ENCODE measurements at regions of chr16 and their contacts with region 1.

Region 1: DNA sequence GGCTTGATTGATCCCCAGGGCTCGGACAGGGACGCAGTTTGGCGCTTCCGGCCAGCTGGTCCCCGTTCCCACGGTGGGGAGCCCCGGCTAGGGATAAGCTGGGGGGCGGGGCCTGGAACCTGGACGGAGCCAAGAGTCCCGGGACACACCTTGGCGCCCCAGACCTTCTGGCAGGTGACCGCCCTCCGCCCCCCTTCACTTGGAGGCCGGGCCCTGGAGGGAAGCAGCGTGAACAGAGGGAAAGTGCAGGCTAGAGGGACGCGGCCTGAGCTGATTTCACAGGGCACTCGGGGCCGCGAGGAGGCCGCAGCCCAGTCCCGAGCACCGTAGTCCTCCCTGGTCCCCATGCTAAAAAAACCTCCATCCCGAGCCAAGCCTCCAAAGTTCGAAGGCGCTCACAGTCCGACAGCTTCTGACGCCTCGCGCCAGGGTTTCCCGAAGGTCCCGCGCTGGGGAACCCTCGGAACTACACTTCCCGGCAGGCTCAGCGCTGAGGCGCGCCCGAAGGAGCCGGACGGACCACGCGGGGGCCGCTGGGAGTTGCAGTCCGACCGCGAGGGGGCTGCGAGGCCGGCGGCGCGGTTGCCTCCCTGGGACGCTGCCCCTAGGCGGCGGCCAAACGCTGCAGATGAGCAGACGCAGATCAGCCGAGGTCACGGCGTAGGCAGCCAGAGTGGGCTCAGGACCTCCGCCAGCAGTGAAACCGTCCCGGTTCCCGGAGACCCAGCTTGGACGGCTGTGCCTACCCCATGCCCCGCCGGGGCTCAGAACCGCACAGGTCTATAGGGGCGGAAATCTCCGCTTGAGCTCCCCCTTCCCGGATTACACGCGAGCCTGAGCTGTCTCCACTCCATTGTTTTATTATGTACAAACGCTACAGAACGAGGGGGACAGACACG is at the start of gene TBX6:
- DNase-seq: peak; percentile 90 to 91
- ATAC-seq: peak; percentile 80 to 93
- H3K4me3 ChIP-seq: peak within 1 kb of the TSS; percentile 59
- H3K27ac ChIP-seq: peak within 1 kb of the TSS; percentile 79 to 94
- H3K4me1 ChIP-seq: peaks cover 29% of the 10 kb centered on the region
- CTCF ChIP-seq: peak; percentile 49; the same call in 2 of the 3 replicates
- EP300 ChIP-seq: no peak
- POLR2A ChIP-seq: peak; percentile 53
- RAD21 ChIP-seq: peak; percentile 76 to 82
- polyA plus RNA-seq, gene TBX6: 0.11 and 0.14 TPM in 2 replicates

Region 2: GRCh38 chr16:29678691-29679267 is 412.9 kb before region 1 on chr16 and contains the start of gene QPRT:
- CTCF ChIA-PET with region 1: no interaction called
- POLR2A ChIA-PET with region 1: no interaction called
- DNase-seq: peak in 1 of 2 experiments; percentile 21
- ATAC-seq: peak; percentile 60 to 76; a peak in 5 of 6 replicates
- H3K4me3 ChIP-seq: no peak within 1 kb of the TSS
- H3K27ac ChIP-seq: peak within 1 kb of the TSS in 1 of 2 experiments; percentile 73; a peak in 3 of 6 replicates
- H3K4me1 ChIP-seq: peaks cover 4% of the 10 kb centered on the region; the same call in 1 of the 3 replicates
- CTCF ChIP-seq: no peak
- EP300 ChIP-seq: no peak
- POLR2A ChIP-seq: no peak
- RAD21 ChIP-seq: no peak
- polyA plus RNA-seq, gene QPRT: 1.9 and 2.1 TPM in 2 replicates

Region 3: DNA sequence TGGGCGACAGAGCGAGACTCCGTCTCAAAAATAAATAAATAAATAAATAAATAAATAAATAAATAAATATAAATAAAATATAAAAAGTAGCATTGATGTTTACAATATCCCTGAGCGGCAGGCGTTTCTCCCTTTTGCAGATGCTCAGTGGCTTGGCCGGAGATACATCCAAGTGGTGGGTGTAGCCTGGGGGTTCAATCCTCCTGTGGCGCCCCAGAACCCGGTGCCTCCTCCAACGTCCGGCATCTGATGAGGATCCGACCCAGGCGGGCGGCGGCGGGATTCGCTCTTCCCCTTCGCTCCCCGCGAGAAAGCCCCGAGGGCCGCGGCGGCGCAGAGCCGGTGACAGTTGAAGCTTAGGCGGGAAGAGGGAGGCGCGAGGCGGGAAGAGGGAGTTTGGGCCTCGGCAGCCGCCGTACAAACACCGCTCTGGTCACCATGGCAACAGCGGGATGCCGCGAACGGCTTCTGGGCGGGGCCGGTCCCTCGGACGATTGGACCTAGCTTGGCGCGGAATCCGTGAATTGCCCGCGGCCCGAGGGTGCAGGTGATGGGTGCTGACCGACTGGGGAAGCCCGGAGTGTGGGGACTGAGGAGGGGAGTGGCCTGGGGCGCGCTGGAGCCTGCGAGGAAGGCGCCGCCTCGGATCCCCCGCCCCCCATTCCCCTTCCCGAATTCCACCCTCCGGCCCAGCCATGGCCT is 38.9 kb before region 1 on chr16:
- CTCF ChIA-PET with region 1: interaction called, 10 read pairs
- POLR2A ChIA-PET with region 1: interaction called, 3 read pairs
- DNase-seq: peak; percentile 94
- ATAC-seq: peak; percentile 74 to 81
- H3K4me3 ChIP-seq: peak overlapping the region; percentile 81
- H3K27ac ChIP-seq: peak overlapping the region; percentile 69 to 88
- H3K4me1 ChIP-seq: peaks cover 22% of the 10 kb centered on the region
- CTCF ChIP-seq: no peak
- EP300 ChIP-seq: no peak
- POLR2A ChIP-seq: no peak
- RAD21 ChIP-seq: no peak

Region 4: DNA sequence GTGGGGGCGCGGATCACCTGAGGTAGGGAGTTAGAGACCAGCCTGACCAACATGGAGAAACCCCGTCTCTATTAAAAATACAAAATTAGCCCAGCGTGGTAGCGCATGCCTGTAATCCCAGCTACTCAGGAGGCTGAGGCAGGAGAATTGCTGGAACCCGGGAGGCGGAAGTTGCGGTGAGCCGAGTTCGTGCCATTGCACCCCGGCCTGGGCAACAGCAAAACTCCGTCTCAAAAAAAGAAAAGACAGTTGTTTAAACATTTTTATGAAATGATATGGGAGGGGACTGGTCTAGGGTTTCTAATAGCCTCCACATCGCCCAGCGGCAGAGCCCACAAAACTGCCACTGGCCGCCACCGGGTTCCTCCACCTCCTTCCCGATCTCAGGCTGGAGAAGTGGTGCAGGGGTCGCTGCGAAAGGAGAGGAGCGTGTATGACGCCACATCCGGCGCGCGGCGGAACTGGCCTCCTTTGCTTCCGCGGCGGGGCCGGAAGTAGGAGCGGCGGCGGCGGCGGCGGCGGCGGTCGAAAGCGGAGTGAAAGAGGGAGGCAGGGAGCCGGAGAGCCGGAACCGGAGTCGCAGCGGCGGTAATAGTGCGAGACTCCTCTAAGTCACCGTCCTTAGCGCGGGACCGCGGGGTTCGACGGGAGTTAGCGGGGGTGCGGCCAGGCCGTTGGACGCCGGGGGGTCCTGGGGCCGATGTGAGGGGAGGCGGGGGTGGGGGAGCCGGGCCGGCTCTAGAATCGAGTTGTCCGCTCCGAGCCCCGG is 16.0 kb before region 1 on chr16 and contains the start of gene PPP4C:
- CTCF ChIA-PET with region 1: interaction called, 143 read pairs
- POLR2A ChIA-PET with region 1: interaction called, 7 read pairs
- DNase-seq: peak; percentile 91 to 98
- ATAC-seq: peak; percentile 93 to 98
- H3K4me3 ChIP-seq: peak within 1 kb of the TSS; percentile 100
- H3K27ac ChIP-seq: peak within 1 kb of the TSS; percentile 97 to 98
- H3K4me1 ChIP-seq: peaks cover 18% of the 10 kb centered on the region
- CTCF ChIP-seq: no peak
- EP300 ChIP-seq: no peak
- POLR2A ChIP-seq: peak; percentile 83
- RAD21 ChIP-seq: no peak
- polyA plus RNA-seq, gene PPP4C: 102 and 117 TPM in 2 replicates

Region 5: GRCh38 chr16:30112197-30113030 is 20.7 kb after region 1 on chr16:
- CTCF ChIA-PET with region 1: interaction called, 153 read pairs
- POLR2A ChIA-PET with region 1: interaction called, 3 read pairs
- DNase-seq: peak; percentile 83 to 84
- ATAC-seq: peak; percentile 86 to 91
- H3K4me3 ChIP-seq: no peak overlapping the region
- H3K27ac ChIP-seq: peak overlapping the region; percentile 5 to 72; a peak in 3 of 6 replicates
- H3K4me1 ChIP-seq: peaks cover 19% of the 10 kb centered on the region
- CTCF ChIP-seq: peak; percentile 83
- EP300 ChIP-seq: no peak
- POLR2A ChIP-seq: no peak
- RAD21 ChIP-seq: peak; percentile 84 to 85

Region 6: DNA sequence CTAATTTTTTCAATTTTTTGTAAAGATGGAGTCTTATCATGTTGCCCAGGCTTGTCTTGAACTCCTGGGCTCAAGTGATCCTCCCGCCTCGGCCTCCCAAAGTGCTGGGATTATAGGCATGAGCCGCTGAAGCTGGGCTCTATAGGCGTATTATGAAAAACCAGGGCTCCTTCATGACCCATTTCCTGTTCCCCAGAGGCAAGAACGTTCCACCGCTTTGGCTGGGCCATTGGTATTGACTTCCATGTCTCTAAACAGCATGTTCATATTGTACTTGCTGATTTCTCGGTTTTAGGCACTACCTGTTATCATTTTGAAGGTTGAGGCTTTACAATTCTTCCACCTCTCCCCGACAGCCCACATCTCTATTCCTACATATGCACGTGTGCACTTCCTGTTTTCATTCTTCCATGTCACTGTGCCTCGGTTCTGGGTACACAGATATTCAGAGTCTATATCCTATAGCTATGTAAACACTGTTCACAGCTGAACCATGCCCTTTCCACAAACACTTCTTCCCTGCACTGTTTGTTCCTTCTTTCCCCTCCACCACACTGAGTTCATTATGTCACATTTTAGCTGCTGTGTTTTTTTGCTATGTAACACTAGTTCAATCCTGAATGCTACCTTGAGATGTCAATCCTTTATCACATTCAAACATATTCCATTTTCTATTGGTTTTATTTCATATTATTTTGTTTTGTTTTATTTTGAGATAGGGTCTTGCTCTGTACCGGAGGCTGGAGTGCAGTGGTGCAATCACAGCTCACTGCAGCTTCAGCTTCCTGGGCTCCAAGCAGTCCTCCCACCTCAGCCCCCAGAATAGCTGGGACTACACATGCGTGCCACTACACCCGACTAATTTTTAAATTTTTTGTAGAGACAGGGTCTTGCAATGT is 48.1 kb after region 1 on chr16:
- CTCF ChIA-PET with region 1: interaction called, 10 read pairs
- POLR2A ChIA-PET with region 1: no interaction called
- DNase-seq: no peak
- ATAC-seq: no peak; a peak in 1 of 6 replicates
- H3K4me3 ChIP-seq: no peak overlapping the region
- H3K27ac ChIP-seq: no peak overlapping the region
- H3K4me1 ChIP-seq: peaks cover 4% of the 10 kb centered on the region; the same call in 1 of the 3 replicates
- CTCF ChIP-seq: no peak
- EP300 ChIP-seq: no peak
- POLR2A ChIP-seq: no peak
- RAD21 ChIP-seq: no peak

Region 7: GRCh38 chr16:30407102-30407803 is 315.5 kb after region 1 on chr16 and contains the start of gene ZNF771:
- CTCF ChIA-PET with region 1: interaction called, 13 read pairs
- POLR2A ChIA-PET with region 1: no interaction called
- DNase-seq: peak; percentile 83 to 90
- ATAC-seq: peak; percentile 88 to 92
- H3K4me3 ChIP-seq: peak within 1 kb of the TSS; percentile 62
- H3K27ac ChIP-seq: peak within 1 kb of the TSS; percentile 80 to 92
- H3K4me1 ChIP-seq: peaks cover 20% of the 10 kb centered on the region
- CTCF ChIP-seq: no peak
- EP300 ChIP-seq: no peak
- POLR2A ChIP-seq: peak; percentile 69
- RAD21 ChIP-seq: no peak
- polyA plus RNA-seq, gene ZNF771: 5.0 and 5.7 TPM in 2 replicates

Measured in A549 (cell line).